ENCODE measurements at regions of chr18 and their contacts with region 1.

Region 1: GRCh38 chr18:32289483-32290075 is 99.7 kb downstream of the MEP1B start:
- DNase-seq: peak in 1 of 3 donors; percentile 85
- ATAC-seq: peak; percentile 91
- H3K4me3 ChIP-seq: no peak overlapping the region
- H3K4me1 ChIP-seq: no peaks in the 10 kb centered on the region
- CTCF ChIP-seq: peak; percentile 62

Region 2: DNA sequence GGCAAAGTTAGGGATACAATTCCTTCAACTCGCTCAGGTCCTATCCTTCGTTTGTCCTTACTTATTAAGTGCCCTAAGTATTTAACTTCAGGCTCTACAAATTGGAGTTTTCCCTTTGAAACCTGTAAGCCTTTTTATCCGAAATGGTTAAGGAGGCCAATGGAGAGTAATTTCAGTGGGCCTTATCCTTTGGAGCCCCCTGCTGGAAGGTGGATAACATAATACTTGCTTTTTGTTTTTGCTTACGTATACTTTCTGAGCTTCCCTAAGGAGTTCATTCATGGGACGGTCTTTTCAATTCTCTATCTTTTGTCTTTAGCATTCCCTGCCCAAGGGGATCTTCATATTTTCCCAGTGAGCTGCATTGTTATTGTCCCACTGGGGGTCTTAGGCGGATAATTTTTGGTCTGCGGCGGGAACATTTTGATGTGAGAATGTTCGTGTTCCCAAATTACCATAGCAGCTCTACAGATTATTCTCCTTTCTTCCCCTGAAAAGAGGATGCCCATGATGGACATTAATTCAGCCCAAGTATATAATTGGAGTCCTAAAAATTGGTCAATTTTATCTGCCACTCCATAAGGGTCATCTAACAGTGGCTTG is 312.2 kb before region 1 on chr18:
- intact Hi-C with region 1: no loop called
- DNase-seq: peak in 1 of 3 donors; percentile 17
- ATAC-seq: peak; percentile 40
- H3K4me3 ChIP-seq: no peak overlapping the region
- H3K4me1 ChIP-seq: no peaks in the 10 kb centered on the region
- CTCF ChIP-seq: peak; percentile 32

Region 3: GRCh38 chr18:32373995-32374394 is 84.4 kb after region 1 on chr18:
- intact Hi-C with region 1: loop called in 1 of 2 experiments (anchors 10 kb)
- DNase-seq: peak in 1 of 3 donors; percentile 80
- ATAC-seq: peak; percentile 23
- H3K4me3 ChIP-seq: no peak overlapping the region
- H3K4me1 ChIP-seq: peaks cover 38% of the 10 kb centered on the region
- CTCF ChIP-seq: no peak

Region 4: GRCh38 chr18:32831781-32832180 is 542.2 kb after region 1 on chr18:
- intact Hi-C with region 1: no loop called
- DNase-seq: no peak
- ATAC-seq: no peak
- H3K4me3 ChIP-seq: no peak overlapping the region
- H3K4me1 ChIP-seq: no peaks in the 10 kb centered on the region
- CTCF ChIP-seq: no peak